GM23248 (cell line): ENCODE measurements at regions of chr4 and their contacts with region 1.

Region 1: DNA sequence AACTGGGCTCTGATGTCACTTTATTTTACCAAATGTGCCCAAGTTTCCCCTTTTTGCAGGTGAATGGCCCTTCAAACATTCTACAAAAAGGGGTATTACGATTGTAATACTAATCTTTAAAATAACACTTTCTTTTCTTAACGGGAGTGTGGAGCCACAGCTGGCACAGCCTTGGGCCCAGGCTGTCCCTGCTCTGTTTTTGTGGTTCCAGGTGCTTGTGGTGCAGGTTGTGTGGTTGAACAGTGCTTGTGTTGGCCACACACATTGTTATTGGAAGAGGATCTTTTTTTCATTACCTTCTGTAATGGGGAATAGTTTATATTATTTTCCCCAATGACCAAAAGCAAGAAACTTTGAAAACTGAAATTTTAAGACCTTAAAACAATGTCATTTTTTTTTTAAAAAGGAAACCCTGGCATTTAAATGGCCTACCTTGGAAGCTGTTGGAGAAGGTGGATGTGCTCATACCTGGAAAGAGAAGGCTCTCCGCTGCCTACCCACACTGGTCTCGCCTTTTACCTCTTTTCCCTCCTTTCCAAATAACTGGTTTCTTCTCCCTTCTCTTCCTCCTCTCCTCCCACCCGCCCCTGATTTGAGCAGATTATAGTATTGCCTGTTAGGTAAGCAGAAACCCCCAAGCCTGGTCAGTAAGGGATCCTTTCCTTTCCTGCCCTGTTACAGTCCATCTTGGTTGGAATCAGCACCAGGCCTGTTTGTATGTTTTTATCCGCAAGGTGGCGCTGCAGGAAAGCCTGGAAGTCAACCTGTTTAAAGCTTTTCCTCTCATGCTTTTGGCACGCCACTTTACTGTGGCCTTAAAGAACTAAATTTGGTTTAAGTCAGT is 28.6 kb downstream of the HADH start:
- DNase-seq: peak; percentile 77
- H3K4me3 ChIP-seq: no peak overlapping the region
- H3K27ac ChIP-seq: no peak overlapping the region
- H3K4me1 ChIP-seq: no peaks in the 10 kb centered on the region
- H3K27me3 ChIP-seq: no peaks in the 10 kb centered on the region

Region 2: DNA sequence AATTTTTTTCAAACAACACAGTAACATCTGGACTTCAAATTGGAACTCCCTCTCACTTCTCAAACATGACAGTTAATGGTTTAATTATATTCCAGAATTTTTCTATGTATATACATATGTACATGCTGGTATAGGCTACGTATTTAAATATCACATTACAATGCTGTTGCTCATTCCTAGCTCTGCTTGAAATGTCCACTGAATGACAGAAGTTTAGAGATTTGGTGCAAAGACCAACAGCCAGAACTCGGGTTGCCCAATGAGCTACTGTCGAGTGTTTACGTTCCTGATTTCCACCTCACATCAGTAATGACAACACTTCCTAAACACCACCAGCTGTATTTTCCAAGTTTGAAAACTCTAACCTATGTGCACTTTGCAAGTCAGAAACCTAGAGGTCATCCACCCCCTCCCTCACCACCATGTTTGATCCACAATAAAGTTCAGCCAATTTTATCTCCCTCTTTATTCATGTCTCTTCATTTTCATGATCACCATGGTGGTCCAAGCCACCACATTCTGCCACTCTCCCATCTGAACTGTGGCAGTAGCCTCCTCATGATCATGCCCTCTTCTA is 552.8 kb after region 1 on chr4:
- in situ Hi-C with region 1: loop called (anchors 5 kb)
- DNase-seq: peak; percentile 7
- H3K4me3 ChIP-seq: no peak overlapping the region
- H3K27ac ChIP-seq: no peak overlapping the region
- H3K4me1 ChIP-seq: no peaks in the 10 kb centered on the region
- H3K27me3 ChIP-seq: peaks cover 17% of the 10 kb centered on the region